A673 (cell line): ENCODE measurements at regions of chr12 and their contacts with region 1.

Region 1: GRCh38 chr12:47021298-47021697 is 58.1 kb upstream of the PCED1B start:
- DNase-seq: peak; percentile 86
- H3K4me3 ChIP-seq: no peak overlapping the region
- H3K27ac ChIP-seq: no peak overlapping the region
- H3K4me1 ChIP-seq: peaks cover 11% of the 10 kb centered on the region
- H3K27me3 ChIP-seq: no peaks in the 10 kb centered on the region
- CTCF ChIP-seq: peak; percentile 75

Region 2: DNA sequence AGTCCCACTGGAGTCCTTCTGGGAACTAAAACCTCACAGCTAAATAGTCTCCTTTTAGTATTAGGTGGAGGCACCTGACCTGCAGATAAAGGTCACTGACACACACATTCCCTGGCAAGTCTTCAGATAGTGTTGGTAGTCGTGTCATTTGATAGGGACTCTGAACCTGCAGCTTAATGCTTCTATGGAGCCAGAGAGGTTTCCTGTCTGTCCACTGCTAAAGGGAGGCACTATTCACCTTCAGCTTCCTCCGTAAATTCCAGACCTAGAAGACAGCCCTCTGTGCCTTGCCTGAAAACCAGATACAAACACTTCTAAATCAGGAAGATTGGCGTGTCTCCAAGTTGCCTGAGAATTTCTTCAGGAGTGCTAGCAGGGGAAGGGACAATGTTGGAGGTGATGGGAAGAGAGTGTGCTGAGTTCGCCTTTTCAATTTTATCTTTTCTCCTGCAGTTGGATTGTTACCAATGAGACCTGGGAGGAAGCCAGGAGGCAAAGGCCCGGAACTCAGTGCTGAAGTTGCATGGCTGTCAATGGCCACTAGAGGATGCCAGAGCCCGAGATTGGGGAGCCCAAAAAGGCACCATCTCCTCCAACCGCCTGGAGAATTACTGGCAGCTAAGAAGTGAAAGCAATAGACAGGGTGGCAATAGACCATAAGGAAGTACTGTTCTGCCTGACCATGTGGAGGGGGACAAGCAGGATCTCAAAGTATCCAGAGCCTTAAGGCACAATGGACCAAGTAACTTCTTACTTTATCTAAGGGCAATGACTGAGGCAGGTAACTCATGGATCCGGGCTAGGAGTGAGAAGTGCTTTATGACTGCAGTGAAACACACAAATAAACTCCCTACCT is 949.3 kb before region 1 on chr12:
- CTCF ChIA-PET with region 1: interaction called, 6 read pairs
- POLR2A ChIA-PET with region 1: no interaction called
- intact Hi-C with region 1: loop called (anchors 2 kb)
- DNase-seq: peak; percentile 87
- H3K4me3 ChIP-seq: no peak overlapping the region
- H3K27ac ChIP-seq: no peak overlapping the region
- H3K4me1 ChIP-seq: no peaks in the 10 kb centered on the region
- H3K27me3 ChIP-seq: no peaks in the 10 kb centered on the region
- CTCF ChIP-seq: peak; percentile 96

Region 3: DNA sequence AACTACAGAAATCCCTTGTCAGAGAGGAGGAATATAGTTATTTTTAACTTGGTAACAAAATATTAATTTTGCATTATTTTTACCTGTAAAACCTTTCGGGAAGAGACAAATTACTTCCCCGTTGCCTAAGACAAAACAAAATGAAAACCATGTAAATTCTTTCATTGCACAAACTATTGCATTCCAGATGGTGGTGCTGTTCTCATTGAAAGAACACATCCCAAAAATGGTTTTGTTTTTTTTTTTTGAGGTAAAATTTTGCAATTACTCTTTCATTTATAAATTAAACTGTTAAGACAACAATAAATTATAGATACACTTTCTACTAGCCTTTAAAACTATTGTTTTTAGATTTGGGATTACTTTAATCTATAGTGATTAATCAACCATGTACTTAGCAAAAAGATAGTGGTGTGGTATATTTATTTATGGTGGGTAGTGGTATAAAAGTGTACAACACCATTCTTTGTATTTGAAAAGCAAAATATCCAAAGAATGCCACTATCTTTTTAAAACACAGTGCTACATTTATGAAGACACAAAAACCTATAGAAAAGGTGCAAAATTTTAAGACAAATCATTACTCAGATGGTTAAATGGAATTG is 867.9 kb before region 1 on chr12:
- CTCF ChIA-PET with region 1: no interaction called
- POLR2A ChIA-PET with region 1: no interaction called
- intact Hi-C with region 1: loop called (anchors 10 kb)
- DNase-seq: peak; percentile 55
- H3K4me3 ChIP-seq: no peak overlapping the region
- H3K27ac ChIP-seq: no peak overlapping the region
- H3K4me1 ChIP-seq: peaks cover 35% of the 10 kb centered on the region
- H3K27me3 ChIP-seq: no peaks in the 10 kb centered on the region
- CTCF ChIP-seq: peak; percentile 87

Region 4: GRCh38 chr12:46675736-46676135 is 345.6 kb before region 1 on chr12:
- CTCF ChIA-PET with region 1: interaction called, 9 read pairs
- POLR2A ChIA-PET with region 1: no interaction called
- intact Hi-C with region 1: loop called (anchors 2 kb)
- DNase-seq: peak; percentile 82
- H3K4me3 ChIP-seq: no peak overlapping the region
- H3K27ac ChIP-seq: no peak overlapping the region
- H3K4me1 ChIP-seq: peaks cover 21% of the 10 kb centered on the region
- H3K27me3 ChIP-seq: no peaks in the 10 kb centered on the region
- CTCF ChIP-seq: peak; percentile 65

Region 5: DNA sequence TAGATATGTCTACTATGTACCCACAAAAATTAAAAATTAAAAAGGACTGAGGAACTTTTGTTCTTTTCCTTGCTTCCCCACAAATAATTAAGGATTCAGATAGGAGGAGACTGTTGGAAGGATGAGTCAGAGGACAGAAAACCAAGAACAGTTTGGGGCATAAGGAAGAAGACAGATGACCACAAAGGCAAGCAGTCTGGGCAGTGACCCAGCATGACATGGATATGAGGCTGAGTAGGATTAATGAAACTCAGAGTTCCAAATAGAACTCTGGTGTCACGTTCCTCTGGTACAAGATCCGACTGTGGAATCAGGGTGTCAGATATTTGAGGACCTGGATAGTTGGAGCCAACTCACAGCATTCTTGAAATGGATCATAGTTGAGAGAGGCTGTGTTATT is 106.2 kb before region 1 on chr12:
- CTCF ChIA-PET with region 1: no interaction called
- POLR2A ChIA-PET with region 1: no interaction called
- intact Hi-C with region 1: no loop called
- DNase-seq: no peak
- H3K4me3 ChIP-seq: no peak overlapping the region
- H3K27ac ChIP-seq: no peak overlapping the region
- H3K4me1 ChIP-seq: no peaks in the 10 kb centered on the region
- H3K27me3 ChIP-seq: no peaks in the 10 kb centered on the region
- CTCF ChIP-seq: no peak

Region 6: GRCh38 chr12:46933947-46934346 is 87.4 kb before region 1 on chr12:
- CTCF ChIA-PET with region 1: no interaction called
- POLR2A ChIA-PET with region 1: no interaction called
- intact Hi-C with region 1: loop called (anchors 5 kb)
- DNase-seq: peak; percentile 74
- H3K4me3 ChIP-seq: no peak overlapping the region
- H3K27ac ChIP-seq: peak overlapping the region; percentile 45
- H3K4me1 ChIP-seq: peaks cover 3% of the 10 kb centered on the region
- H3K27me3 ChIP-seq: no peaks in the 10 kb centered on the region
- CTCF ChIP-seq: peak; percentile 73

Region 7: GRCh38 chr12:47102845-47103651 is 81.8 kb after region 1 on chr12:
- CTCF ChIA-PET with region 1: no interaction called
- POLR2A ChIA-PET with region 1: no interaction called
- intact Hi-C with region 1: no loop called
- DNase-seq: no peak
- H3K4me3 ChIP-seq: no peak overlapping the region
- H3K27ac ChIP-seq: no peak overlapping the region
- H3K4me1 ChIP-seq: no peaks in the 10 kb centered on the region
- H3K27me3 ChIP-seq: no peaks in the 10 kb centered on the region
- CTCF ChIP-seq: no peak